CD4-positive, alpha-beta memory T cell (primary cell): ENCODE measurements at regions of chr19 and their contacts with region 1.

Region 1: GRCh38 chr19:5790573-5791520 is at the start of gene DUS3L:
- DNase-seq: peak; percentile 92 to 98 (median 97)
- H3K4me3 ChIP-seq: peak within 1 kb of the TSS; percentile 62 to 93
- H3K4me3 Mint-ChIP-seq: peak within 1 kb of the TSS; percentile 96 to 100 (median 99)
- H3K27ac ChIP-seq: peak within 1 kb of the TSS; percentile 97
- H3K27ac Mint-ChIP-seq: peak within 1 kb of the TSS; percentile 94 to 100 (median 100)
- H3K4me1 ChIP-seq: peaks cover 14% of the 10 kb centered on the region
- H3K4me1 Mint-ChIP-seq: peaks cover 11 to 24% (median 12%) of the 10 kb centered on the region in 4 donors
- H3K27me3 ChIP-seq: no peaks in the 10 kb centered on the region
- H3K27me3 Mint-ChIP-seq: peaks cover 0 to 2% of the 10 kb centered on the region in 2 donors
- total RNA-seq, gene DUS3L: 58.7 to 72.9 TPM

Region 2: GRCh38 chr19:5690125-5690954 is 100.5 kb before region 1 on chr19 and contains the start of gene RPL36:
- CTCF ChIA-PET with region 1: interaction called, 3 read pairs
- POLR2A ChIA-PET with region 1: interaction called, 11 read pairs
- intact Hi-C with region 1: loop called (anchors 1 kb)
- DNase-seq: peak; percentile 97 to 99 (median 98)
- H3K4me3 ChIP-seq: peak within 1 kb of the TSS; percentile 84 to 86
- H3K4me3 Mint-ChIP-seq: peak within 1 kb of the TSS; percentile 92 to 97 (median 94)
- H3K27ac ChIP-seq: peak within 1 kb of the TSS; percentile 83
- H3K27ac Mint-ChIP-seq: peak within 1 kb of the TSS; percentile 94 to 100 (median 97)
- H3K4me1 ChIP-seq: peaks cover 36% of the 10 kb centered on the region
- H3K4me1 Mint-ChIP-seq: peaks cover 19 to 46% (median 31%) of the 10 kb centered on the region in 4 donors
- H3K27me3 ChIP-seq: no peaks in the 10 kb centered on the region
- H3K27me3 Mint-ChIP-seq: no peaks in the 10 kb centered on the region
- total RNA-seq, gene RPL36: 1,675 to 1,762 TPM

Region 3: GRCh38 chr19:5803752-5804515 is 13.1 kb after region 1 on chr19:
- CTCF ChIA-PET with region 1: interaction called, 43 read pairs
- POLR2A ChIA-PET with region 1: interaction called, 13 read pairs
- intact Hi-C with region 1: loop called (anchors 2 kb)
- DNase-seq: peak; percentile 89 to 93 (median 91)
- H3K4me3 ChIP-seq: peak overlapping the region in 1 of 2 donors; percentile 40
- H3K4me3 Mint-ChIP-seq: peak overlapping the region; percentile 59 to 91 (median 76)
- H3K27ac ChIP-seq: peak overlapping the region; percentile 19
- H3K27ac Mint-ChIP-seq: peak overlapping the region; percentile 57 to 92 (median 87)
- H3K4me1 ChIP-seq: peaks cover 20% of the 10 kb centered on the region
- H3K4me1 Mint-ChIP-seq: peaks cover 6 to 30% (median 15%) of the 10 kb centered on the region in 4 donors
- H3K27me3 ChIP-seq: no peaks in the 10 kb centered on the region
- H3K27me3 Mint-ChIP-seq: peaks cover 13 to 14% of the 10 kb centered on the region in 2 donors

Region 4: GRCh38 chr19:5870986-5871394 is 80.1 kb after region 1 on chr19:
- CTCF ChIA-PET with region 1: no interaction called
- POLR2A ChIA-PET with region 1: no interaction called
- intact Hi-C with region 1: no loop called
- DNase-seq: no peak
- H3K4me3 ChIP-seq: no peak overlapping the region
- H3K4me3 Mint-ChIP-seq: no peak overlapping the region
- H3K27ac ChIP-seq: no peak overlapping the region
- H3K27ac Mint-ChIP-seq: no peak overlapping the region
- H3K4me1 ChIP-seq: no peaks in the 10 kb centered on the region
- H3K4me1 Mint-ChIP-seq: no peaks in the 10 kb centered on the region
- H3K27me3 ChIP-seq: no peaks in the 10 kb centered on the region
- H3K27me3 Mint-ChIP-seq: peaks cover 1 to 2% of the 10 kb centered on the region in 2 donors

Region 5: GRCh38 chr19:5977785-5978605 is 187.1 kb after region 1 on chr19 and contains the start of gene RANBP3:
- CTCF ChIA-PET with region 1: no interaction called
- POLR2A ChIA-PET with region 1: interaction called, 6 read pairs
- intact Hi-C with region 1: loop called (anchors 1 kb)
- DNase-seq: peak; percentile 98 to 100 (median 99)
- H3K4me3 ChIP-seq: peak within 1 kb of the TSS; percentile 78 to 81
- H3K4me3 Mint-ChIP-seq: peak within 1 kb of the TSS; percentile 91 to 99 (median 94)
- H3K27ac ChIP-seq: peak within 1 kb of the TSS; percentile 84
- H3K27ac Mint-ChIP-seq: peak within 1 kb of the TSS; percentile 95 to 97 (median 96)
- H3K4me1 ChIP-seq: peaks cover 65% of the 10 kb centered on the region
- H3K4me1 Mint-ChIP-seq: peaks cover 38 to 71% (median 50%) of the 10 kb centered on the region in 4 donors
- H3K27me3 ChIP-seq: no peaks in the 10 kb centered on the region
- H3K27me3 Mint-ChIP-seq: no peaks in the 10 kb centered on the region
- total RNA-seq, gene RANBP3: 84.1 to 94.9 TPM